ENCODE measurements at regions of chr7 and their contacts with region 1.

Region 1: DNA sequence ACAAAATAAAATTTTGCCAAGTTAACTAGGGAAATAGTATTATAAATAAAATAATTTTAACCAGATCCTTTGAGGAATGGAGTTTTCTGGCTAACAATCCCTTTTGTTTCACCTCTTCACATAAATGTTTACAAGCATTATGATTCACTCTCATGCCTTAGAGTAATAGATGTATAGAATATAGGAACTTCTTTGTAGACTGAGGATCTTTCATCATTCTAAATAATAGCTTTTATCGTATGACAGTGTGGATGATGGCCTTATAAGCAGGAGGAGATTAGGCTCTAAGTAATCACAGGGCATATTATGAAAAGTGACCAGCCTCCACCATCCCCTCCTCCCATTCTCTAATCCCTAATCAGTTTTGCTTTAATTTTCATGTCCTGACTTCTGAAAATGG is 13.5 kb downstream of the ING3 start:
- DNase-seq: no peak
- H3K4me3 ChIP-seq: no peak overlapping the region
- H3K27ac ChIP-seq: no peak overlapping the region
- H3K27me3 ChIP-seq: no peaks in the 10 kb centered on the region
- CTCF ChIP-seq: no peak

Region 2: GRCh38 chr7:120987683-120988590 is 23.8 kb after region 1 on chr7:
- CTCF ChIA-PET with region 1: interaction called, 11 read pairs
- POLR2A ChIA-PET with region 1: no interaction called
- DNase-seq: peak; percentile 90
- H3K4me3 ChIP-seq: peak overlapping the region; percentile 76
- H3K27ac ChIP-seq: peak overlapping the region; percentile 40
- H3K27me3 ChIP-seq: no peaks in the 10 kb centered on the region
- CTCF ChIP-seq: peak; percentile 99